Activated CD4-positive, alpha-beta T cell treated with anti-CD3 and anti-CD28 coated beads, Interleukin-2, amount 10 ng/mL, durations not matched to agents 7 days and 5 days (primary cell): ENCODE measurements at regions of chr2 and their contacts with region 1.

Region 1: GRCh38 chr2:196166876-196167275 is 4.5 kb downstream of the STK17B start:
- DNase-seq: peak; percentile 55
- H3K4me3 Mint-ChIP-seq: peak overlapping the region; percentile 95
- H3K27ac Mint-ChIP-seq: peak overlapping the region; percentile 96
- H3K4me1 Mint-ChIP-seq: peaks cover 32% of the 10 kb centered on the region
- H3K27me3 Mint-ChIP-seq: no peaks in the 10 kb centered on the region

Region 2: DNA sequence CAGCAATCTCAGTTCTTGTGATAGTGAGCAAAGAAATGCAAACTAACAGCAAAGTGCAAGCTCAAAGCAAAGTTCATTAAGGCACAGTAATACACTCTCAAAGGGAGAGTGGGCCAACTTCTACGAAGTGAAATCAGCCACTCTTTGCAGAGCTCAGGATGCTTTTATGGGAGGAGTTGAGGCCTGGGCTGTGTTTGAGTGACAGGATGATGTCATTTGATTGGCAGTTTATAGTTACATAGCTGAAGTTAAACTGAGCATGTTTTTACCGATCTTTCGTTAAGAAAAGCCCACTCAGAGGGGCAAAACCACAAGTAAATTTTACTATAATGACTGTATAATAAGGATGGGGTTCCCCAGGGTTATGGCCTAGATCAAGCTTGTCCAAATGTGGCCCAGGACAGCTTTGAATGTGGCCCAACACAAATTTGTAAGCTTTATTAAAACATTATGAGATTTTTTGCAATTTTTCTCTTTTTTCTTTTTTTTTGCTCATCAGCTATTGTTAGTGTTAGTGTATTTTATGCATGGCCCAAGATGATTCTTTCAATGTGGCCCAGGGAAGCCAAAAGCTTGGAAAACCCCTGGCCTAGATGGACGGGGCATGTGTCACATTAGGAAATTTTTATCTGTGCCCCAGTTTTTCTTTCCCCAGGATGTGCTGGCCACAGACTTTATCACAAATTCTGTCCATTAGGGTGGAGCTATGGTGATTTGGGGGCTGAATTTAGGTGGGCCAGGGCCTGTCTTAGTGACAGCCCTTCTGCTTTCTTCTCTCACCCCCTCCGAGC is 89.9 kb before region 1 on chr2:
- CTCF ChIA-PET with region 1: no interaction called
- POLR2A ChIA-PET with region 1: no interaction called
- DNase-seq: no peak
- H3K4me3 Mint-ChIP-seq: no peak overlapping the region
- H3K27ac Mint-ChIP-seq: no peak overlapping the region
- H3K4me1 Mint-ChIP-seq: peaks cover 13% of the 10 kb centered on the region
- H3K27me3 Mint-ChIP-seq: no peaks in the 10 kb centered on the region

Region 3: DNA sequence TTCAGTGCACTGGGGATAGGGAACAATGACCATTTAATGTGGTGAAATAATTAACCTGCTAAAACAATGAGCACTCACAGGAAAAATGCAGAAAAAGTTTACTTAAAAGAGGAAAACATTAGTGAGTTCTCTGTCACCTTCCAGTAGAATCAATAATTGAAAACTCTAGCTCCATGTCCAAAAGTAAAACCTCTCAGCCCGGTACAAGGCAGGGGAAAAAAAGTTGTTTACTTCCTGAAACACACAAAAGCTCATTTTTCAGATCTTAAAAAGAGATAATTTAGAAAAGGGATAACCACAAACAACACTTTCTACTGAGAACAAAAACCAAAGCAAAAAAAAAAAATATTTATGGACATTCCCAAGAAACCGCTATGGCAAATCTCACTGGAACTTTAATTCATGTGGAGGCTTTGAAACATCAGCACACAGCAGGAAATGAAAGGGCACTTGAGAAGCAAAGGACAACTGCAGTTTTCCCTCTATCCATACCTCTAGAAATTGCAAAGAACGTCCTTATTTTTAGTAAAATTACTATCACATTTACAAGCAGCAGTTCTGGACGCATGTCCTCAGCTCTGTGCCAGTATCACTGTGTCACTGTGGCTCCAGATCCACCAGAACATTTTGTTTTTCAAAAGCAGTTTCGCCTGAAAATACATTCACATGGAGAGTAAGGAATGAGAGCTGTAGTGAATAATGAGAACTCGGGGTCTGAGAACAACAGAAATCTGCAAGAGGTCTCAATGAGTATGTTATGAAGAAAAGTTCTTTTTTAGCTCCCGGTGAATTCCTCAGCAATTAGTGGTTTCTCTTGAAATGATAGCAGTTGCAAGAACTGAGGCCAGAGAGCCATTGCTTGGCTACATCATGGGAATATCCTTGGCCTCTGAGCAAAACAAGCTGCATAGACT is 53.6 kb before region 1 on chr2:
- CTCF ChIA-PET with region 1: no interaction called
- POLR2A ChIA-PET with region 1: no interaction called
- DNase-seq: no peak
- H3K4me3 Mint-ChIP-seq: no peak overlapping the region
- H3K27ac Mint-ChIP-seq: no peak overlapping the region
- H3K4me1 Mint-ChIP-seq: peaks cover 13% of the 10 kb centered on the region
- H3K27me3 Mint-ChIP-seq: no peaks in the 10 kb centered on the region

Region 4: DNA sequence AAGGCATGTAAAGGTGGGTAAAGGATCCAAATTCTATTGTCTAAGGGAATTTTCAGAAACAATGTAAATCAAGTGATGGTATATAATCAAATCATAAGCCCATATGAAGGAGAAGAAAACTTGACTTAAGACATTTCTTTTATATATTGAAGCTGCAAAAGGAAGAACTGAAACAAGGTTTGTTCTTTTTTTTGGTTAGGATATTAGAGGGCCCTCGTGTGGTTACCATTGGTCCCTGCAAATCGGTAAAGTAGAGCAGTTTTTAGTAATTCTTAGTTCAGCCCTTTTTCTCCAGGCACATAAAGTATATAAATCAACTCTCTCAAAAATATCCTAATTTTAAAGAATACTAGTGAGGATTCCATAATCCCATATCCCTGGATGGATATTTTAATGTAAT is 110.1 kb after region 1 on chr2:
- CTCF ChIA-PET with region 1: interaction called, 16 read pairs
- POLR2A ChIA-PET with region 1: interaction called, 7 read pairs
- DNase-seq: peak; percentile 55
- H3K4me3 Mint-ChIP-seq: peak overlapping the region; percentile 22
- H3K27ac Mint-ChIP-seq: peak overlapping the region; percentile 21
- H3K4me1 Mint-ChIP-seq: peaks cover 49% of the 10 kb centered on the region
- H3K27me3 Mint-ChIP-seq: no peaks in the 10 kb centered on the region

Region 5: GRCh38 chr2:196322973-196323810 is 156.3 kb after region 1 on chr2:
- CTCF ChIA-PET with region 1: no interaction called
- POLR2A ChIA-PET with region 1: no interaction called
- DNase-seq: no peak
- H3K4me3 Mint-ChIP-seq: no peak overlapping the region
- H3K27ac Mint-ChIP-seq: no peak overlapping the region
- H3K4me1 Mint-ChIP-seq: no peaks in the 10 kb centered on the region
- H3K27me3 Mint-ChIP-seq: peaks cover 6% of the 10 kb centered on the region